CD8-positive, alpha-beta T cell (primary cell): ENCODE measurements at regions of chr2 and their contacts with region 1.

Region 1: DNA sequence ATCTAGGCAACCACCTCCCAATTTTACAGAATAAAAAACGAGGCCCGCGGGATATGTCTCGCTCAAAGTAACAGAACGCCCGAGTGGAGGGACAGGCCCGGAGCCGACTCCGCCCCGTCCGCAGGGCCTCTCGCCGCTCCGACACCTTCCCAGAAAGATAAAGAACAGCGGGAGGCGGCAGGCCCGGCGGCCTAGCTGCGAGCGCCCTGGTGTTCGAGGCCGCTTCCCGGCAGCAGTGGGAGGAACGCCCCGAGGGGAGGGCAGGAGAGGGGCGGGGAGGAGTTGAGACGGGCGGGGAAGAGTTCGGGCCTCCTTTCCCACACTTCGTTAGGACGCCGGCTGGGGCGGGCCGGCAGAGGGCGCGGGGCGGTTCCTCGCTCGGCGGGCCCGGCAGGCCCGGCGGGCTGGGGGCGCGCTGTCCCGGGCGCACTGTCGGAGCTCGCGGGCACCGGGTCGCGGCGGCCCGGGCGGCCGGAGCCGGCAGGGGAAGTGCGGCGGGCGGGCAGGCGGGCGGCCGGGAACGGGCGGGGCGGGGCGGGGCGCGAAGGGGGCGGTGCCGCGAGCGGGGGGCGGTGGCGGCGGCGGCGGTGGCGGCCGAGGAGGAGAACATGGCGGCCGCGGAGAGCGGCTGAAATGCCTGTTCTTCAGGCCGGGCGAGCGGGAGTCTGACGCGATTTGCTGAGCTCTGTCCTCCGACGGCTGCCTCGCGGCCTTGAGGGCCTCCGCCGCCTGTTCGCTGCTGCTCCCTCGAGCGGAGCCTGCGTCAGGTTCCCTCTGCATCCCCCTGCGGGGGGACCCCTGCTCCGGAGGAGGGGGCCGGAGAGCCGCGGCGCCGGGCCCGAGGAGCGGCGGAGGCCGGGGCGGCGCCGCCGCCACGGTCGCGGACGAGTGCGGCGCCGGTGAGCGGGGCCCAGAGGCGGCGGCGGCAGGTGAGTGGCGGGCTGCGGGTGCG is at the start of gene NCOA1:
- DNase-seq: peak; percentile 77 to 94 (median 89)
- ATAC-seq: peak; percentile 85
- H3K4me3 ChIP-seq: peak within 1 kb of the TSS; percentile 63 to 72
- H3K4me3 Mint-ChIP-seq: peak within 1 kb of the TSS; percentile 89
- H3K27ac ChIP-seq: peak within 1 kb of the TSS; percentile 70 to 93
- H3K27ac Mint-ChIP-seq: peak within 1 kb of the TSS; percentile 94
- H3K4me1 ChIP-seq: peaks cover 37% of the 10 kb centered on the region
- H3K4me1 Mint-ChIP-seq: peaks cover 53% of the 10 kb centered on the region
- H3K27me3 ChIP-seq: no peaks in the 10 kb centered on the region
- H3K27me3 Mint-ChIP-seq: no peaks in the 10 kb centered on the region
- CTCF ChIP-seq: no peak
- total RNA-seq, gene NCOA1: 32.6 to 33.5 TPM

Region 2: DNA sequence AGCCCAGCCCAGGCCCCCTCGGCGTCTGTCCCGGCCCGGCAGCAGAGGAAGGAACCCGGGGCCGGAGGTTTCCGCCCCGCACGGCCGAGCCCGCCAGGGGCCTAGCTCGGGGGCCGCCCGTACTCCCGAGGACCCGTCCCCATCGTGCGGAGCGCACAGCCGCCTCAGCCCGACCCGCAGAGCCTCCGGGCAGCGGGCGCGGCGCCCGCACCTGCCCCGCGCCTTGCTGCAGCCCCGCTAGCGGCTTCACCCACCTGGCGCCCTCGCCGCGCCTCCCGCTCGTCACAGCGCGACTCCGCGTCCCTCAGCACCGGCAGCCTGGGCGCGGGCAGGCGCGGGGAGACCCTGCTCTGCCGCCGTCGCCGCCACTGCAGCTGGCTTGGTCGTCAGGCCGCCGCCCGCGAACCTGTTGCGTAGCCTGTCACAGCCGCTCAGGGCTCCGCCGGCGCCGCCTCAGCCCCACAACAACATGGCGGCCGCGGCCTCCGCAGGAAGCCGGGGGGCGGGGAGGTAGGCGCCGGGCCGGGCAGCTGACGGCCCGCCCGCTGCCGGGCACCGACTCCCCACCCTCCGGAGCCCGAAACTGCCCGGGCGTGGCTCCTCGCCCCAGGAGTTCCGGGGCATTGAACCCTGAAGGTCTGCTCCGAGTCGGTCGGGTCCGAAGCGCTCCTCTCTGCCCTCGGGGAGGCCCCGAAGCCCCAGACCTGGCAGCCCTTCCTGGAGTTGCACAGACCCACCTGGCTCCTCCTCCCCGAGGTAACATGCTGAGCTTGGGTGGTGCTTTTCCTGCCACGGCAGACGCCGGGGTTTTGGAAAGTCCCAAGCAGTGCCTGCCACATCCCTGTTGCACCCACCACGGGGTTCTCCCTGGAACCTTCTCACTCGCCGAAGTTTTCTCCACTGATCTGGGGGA is 130.6 kb before region 1 on chr2 and contains the start of gene ITSN2:
- CTCF ChIA-PET with region 1: no interaction called
- POLR2A ChIA-PET with region 1: interaction called, 3 read pairs
- intact Hi-C with region 1: loop called (anchors 2 kb)
- DNase-seq: peak; percentile 63 to 95 (median 82)
- ATAC-seq: peak; percentile 83
- H3K4me3 ChIP-seq: peak within 1 kb of the TSS; percentile 79 to 94
- H3K4me3 Mint-ChIP-seq: peak within 1 kb of the TSS; percentile 96
- H3K27ac ChIP-seq: peak within 1 kb of the TSS; percentile 93 to 95
- H3K27ac Mint-ChIP-seq: peak within 1 kb of the TSS; percentile 95
- H3K4me1 ChIP-seq: peaks cover 20% of the 10 kb centered on the region
- H3K4me1 Mint-ChIP-seq: peaks cover 31% of the 10 kb centered on the region
- H3K27me3 ChIP-seq: no peaks in the 10 kb centered on the region
- H3K27me3 Mint-ChIP-seq: no peaks in the 10 kb centered on the region
- CTCF ChIP-seq: no peak
- total RNA-seq, gene ITSN2: 86.0 to 89.3 TPM

Region 3: DNA sequence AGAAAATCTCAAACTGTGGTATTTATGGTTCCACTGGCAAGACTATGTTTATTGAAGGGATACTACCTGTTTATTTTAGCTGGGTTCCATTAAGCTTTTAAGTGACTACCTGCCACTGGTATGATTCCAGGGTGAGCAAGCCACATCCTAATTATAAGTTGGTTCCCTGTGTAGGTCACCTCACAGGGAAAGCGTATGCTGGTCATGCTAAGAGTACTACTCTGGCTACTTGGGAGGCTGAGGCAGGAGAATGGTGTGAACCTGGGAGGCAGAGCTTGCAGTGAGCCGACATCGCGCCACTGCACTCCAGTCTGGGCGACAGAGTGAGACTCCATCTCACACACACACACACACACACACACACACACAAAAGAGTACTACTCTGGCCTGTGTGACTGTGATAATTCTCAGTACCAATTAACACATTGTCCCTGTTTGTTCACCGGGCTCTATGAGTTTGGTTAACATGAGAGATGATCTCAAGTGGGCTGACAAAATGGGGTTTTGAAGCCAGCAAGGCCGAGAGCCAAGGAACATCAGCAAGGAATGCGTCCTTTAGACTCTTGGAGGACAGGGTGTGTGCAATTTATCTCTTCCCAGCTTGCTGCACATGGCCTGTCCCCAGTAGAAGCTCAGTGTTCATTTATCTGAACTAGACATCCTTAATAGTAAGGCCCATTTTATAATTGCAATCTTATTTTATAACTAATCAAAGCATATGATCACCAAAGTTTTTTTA is 115.4 kb before region 1 on chr2:
- CTCF ChIA-PET with region 1: no interaction called
- POLR2A ChIA-PET with region 1: no interaction called
- intact Hi-C with region 1: no loop called
- DNase-seq: no peak
- ATAC-seq: no peak
- H3K4me3 ChIP-seq: no peak overlapping the region
- H3K4me3 Mint-ChIP-seq: no peak overlapping the region
- H3K27ac ChIP-seq: no peak overlapping the region
- H3K27ac Mint-ChIP-seq: no peak overlapping the region
- H3K4me1 ChIP-seq: no peaks in the 10 kb centered on the region
- H3K4me1 Mint-ChIP-seq: no peaks in the 10 kb centered on the region
- H3K27me3 ChIP-seq: no peaks in the 10 kb centered on the region
- H3K27me3 Mint-ChIP-seq: no peaks in the 10 kb centered on the region
- CTCF ChIP-seq: no peak

Region 4: DNA sequence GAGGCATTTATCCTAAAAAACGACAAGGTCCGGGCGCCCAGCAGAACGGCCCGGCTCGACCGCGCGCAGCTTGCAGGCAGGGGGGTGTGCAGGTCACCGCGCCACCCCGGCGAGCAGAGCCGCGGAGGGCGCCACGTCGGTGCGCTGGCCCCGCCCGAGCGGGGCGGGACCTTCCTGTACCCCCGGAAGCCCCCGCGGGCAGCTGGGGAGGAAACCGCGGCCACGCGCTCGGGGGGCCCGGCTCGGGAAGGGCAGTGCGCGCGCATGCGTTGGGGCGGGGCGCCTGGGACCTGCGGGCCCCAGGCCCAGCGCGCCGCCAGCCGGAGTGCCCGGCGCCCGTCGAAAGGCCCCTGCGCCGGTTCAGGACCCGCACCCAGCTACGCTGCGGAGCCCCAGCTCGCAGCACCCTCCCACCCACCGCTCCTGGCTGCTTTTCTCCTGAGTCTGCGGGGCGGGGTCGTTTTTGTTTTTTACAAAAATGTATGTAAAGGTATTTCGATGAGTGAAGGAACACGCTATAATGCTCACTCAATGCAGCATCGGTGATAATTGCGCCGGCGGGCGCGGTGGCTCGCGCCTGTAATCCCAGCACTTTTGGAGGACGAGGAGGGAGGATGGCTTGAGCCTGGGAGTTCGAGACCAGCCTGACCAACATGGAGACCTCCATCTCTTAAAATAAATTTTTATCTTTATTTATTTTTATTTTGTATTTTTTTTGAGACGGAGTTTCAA is 725.2 kb after region 1 on chr2:
- CTCF ChIA-PET with region 1: no interaction called
- POLR2A ChIA-PET with region 1: no interaction called
- intact Hi-C with region 1: loop called in 1 of 2 experiments (anchors 10 kb)
- DNase-seq: peak; percentile 64 to 96 (median 88)
- ATAC-seq: peak; percentile 95
- H3K4me3 ChIP-seq: peak overlapping the region; percentile 59 to 72
- H3K4me3 Mint-ChIP-seq: peak overlapping the region; percentile 77
- H3K27ac ChIP-seq: peak overlapping the region; percentile 68 to 72
- H3K27ac Mint-ChIP-seq: peak overlapping the region; percentile 80
- H3K4me1 ChIP-seq: peaks cover 7% of the 10 kb centered on the region
- H3K4me1 Mint-ChIP-seq: peaks cover 10% of the 10 kb centered on the region
- H3K27me3 ChIP-seq: no peaks in the 10 kb centered on the region
- H3K27me3 Mint-ChIP-seq: no peaks in the 10 kb centered on the region
- CTCF ChIP-seq: no peak